Colonic mucosa (tissue), 4 donors: ENCODE measurements at regions of chr19 and their contacts with region 1.

Region 1: DNA sequence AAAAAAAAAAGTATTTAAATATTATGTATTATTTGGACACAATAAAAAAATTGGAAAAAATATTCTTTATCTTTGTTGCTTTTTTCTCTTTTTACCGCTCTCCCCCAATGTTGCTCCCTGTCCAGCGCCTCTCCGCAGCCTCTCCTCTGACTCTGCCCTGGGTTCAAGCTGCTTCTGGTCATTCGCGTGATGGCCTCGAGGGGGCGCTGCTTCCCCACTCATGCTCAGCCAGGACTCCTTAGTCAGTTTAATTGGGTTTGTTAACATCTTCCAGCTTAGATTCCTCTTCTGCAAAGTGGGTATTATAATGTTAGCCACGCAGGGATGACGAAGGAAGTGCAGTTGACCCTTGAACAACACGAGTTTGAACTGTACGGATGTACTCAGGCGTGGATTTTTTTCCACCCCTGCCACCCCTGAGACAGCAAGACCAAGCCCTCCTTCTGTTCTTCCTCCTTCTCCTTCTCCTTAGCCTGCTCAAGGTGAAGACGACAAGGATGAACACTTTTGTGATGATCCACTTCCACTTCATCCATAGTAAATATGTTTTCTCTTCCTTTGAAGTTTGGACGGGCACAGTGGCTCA is 4.9 kb upstream of the NWD1 start:
- DNase-seq: peak; percentile 72
- H3K4me3 ChIP-seq: no peak overlapping the region
- H3K27ac ChIP-seq: no peak overlapping the region
- H3K4me1 ChIP-seq: peaks cover 3% of the 10 kb centered on the region
- H3K27me3 ChIP-seq: no peaks in the 10 kb centered on the region
- CTCF ChIP-seq: peak; percentile 92

Region 2: DNA sequence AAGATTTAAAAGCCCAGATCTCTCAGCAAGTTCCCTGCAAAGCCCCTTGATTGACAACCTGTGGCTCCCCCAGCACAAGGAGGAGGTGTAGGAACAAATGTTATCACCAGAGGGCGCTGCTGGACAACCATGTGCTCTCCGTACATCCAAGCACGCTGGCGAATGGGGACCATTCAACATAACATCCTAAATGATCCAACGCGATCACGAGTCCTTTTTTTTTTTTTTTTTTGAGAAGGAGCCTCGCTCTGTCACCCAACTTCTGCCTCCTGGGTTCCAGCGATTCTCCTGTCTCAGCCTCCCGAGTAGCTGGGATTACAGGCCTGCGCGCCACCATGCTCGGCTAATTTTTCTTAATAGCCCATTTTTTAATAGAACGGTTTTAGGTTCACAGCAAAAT is 56.8 kb after region 1 on chr19:
- intact Hi-C with region 1: loop called (anchors 5 kb)
- DNase-seq: peak; percentile 84
- H3K4me3 ChIP-seq: no peak overlapping the region
- H3K27ac ChIP-seq: no peak overlapping the region
- H3K4me1 ChIP-seq: no peaks in the 10 kb centered on the region
- H3K27me3 ChIP-seq: no peaks in the 10 kb centered on the region
- CTCF ChIP-seq: peak; percentile 78

Region 3: GRCh38 chr19:16897154-16897855 is 182.5 kb after region 1 on chr19:
- intact Hi-C with region 1: loop called (anchors 5 kb)
- DNase-seq: peak; percentile 95
- H3K4me3 ChIP-seq: peak overlapping the region; percentile 48
- H3K27ac ChIP-seq: peak overlapping the region; percentile 45
- H3K4me1 ChIP-seq: no peaks in the 10 kb centered on the region
- H3K27me3 ChIP-seq: peaks cover 7% of the 10 kb centered on the region
- CTCF ChIP-seq: no peak

Region 4: DNA sequence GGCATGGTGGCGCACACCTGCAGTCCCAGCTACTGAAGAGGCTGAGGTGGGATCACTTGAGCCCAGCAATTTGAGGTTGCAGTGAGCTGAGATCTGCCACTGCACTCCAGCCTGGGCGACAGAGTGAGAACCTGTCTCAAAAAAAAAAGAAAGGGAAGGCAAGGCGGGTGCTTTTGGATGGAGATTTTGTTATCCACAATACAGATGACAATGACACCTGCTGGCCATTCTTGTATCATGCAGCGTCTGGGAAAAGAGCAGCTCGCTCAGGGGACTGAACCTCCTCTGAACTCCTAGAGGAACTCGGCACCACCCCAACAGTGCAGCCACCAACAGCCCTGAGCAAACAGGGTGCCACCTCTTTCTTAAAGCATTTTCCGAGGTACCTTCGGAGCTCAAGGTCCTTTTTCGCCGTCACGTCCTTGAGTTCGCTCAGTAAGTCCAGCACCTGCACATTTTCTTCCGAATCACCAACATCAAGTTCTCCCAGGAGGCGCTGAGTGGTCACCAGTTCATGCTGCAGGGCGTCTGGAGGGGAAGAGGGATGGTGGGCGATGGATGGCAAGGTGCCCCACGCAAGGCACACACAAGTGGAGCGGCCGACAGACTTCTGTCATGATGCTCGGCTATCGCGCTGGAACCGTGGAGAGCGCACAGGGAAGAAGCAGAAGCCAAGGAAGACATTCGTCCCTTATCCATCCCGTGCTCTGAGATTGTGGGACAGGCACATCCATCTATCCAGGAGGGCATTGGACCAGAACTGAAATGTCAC is 337.8 kb after region 1 on chr19:
- intact Hi-C with region 1: loop called (anchors 5 kb)
- DNase-seq: peak; percentile 66
- H3K4me3 ChIP-seq: no peak overlapping the region
- H3K27ac ChIP-seq: no peak overlapping the region
- H3K4me1 ChIP-seq: no peaks in the 10 kb centered on the region
- H3K27me3 ChIP-seq: no peaks in the 10 kb centered on the region
- CTCF ChIP-seq: peak; percentile 60